CD8-positive, alpha-beta T cell (primary cell): ENCODE measurements at regions of chr17 and their contacts with region 1.

Region 1: DNA sequence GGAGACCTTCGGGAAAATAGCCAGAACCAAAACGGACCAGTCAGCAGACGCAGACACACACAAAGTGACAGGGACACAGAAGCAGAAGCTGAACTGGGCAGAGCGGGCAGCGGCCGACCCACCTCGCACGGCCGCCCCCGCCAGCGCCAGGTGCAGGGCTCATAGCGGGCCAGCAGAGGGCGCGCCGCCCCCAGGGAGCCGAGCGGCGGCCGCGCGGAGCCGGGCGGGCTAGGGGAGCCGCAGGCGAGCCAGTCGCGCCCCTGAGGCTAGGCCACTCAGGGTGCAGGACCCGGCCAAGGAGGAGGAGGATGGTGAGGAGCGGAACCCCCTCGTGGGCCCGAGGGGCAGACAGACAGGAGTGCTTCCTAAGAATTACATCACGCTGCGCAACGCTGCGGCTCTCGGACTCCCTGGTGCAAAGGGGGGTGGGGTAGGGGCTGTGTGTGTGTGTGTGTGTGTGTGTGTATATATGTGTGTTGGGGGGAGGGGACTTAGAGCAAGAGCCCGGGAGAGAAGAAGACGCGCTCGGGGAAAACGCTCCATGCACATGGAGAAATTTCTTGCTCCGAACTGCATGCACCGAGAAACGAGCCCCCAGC is 913 bp upstream of the NOG start:
- DNase-seq: peak; percentile 33 to 87 (median 64)
- ATAC-seq: peak; percentile 63
- H3K4me3 ChIP-seq: peak overlapping the region; percentile 50 to 83
- H3K4me3 Mint-ChIP-seq: peak overlapping the region; percentile 80
- H3K27ac ChIP-seq: peak overlapping the region in 1 of 2 experiments; percentile 46
- H3K27ac Mint-ChIP-seq: peak overlapping the region; percentile 49
- H3K4me1 ChIP-seq: peaks cover 8% of the 10 kb centered on the region
- H3K4me1 Mint-ChIP-seq: peaks cover 20% of the 10 kb centered on the region
- H3K27me3 ChIP-seq: peaks cover 0 to 28% of the 10 kb centered on the region in 2 experiments
- H3K27me3 Mint-ChIP-seq: peaks cover 28% of the 10 kb centered on the region
- CTCF ChIP-seq: peak; percentile 80

Region 2: GRCh38 chr17:56096026-56096810 is 496.4 kb before region 1 on chr17:
- CTCF ChIA-PET with region 1: no interaction called
- POLR2A ChIA-PET with region 1: no interaction called
- intact Hi-C with region 1: no loop called
- DNase-seq: no peak
- ATAC-seq: no peak
- H3K4me3 ChIP-seq: no peak overlapping the region
- H3K4me3 Mint-ChIP-seq: no peak overlapping the region
- H3K27ac ChIP-seq: no peak overlapping the region
- H3K27ac Mint-ChIP-seq: no peak overlapping the region
- H3K4me1 ChIP-seq: no peaks in the 10 kb centered on the region
- H3K4me1 Mint-ChIP-seq: no peaks in the 10 kb centered on the region
- H3K27me3 ChIP-seq: no peaks in the 10 kb centered on the region
- H3K27me3 Mint-ChIP-seq: no peaks in the 10 kb centered on the region
- CTCF ChIP-seq: no peak

Region 3: DNA sequence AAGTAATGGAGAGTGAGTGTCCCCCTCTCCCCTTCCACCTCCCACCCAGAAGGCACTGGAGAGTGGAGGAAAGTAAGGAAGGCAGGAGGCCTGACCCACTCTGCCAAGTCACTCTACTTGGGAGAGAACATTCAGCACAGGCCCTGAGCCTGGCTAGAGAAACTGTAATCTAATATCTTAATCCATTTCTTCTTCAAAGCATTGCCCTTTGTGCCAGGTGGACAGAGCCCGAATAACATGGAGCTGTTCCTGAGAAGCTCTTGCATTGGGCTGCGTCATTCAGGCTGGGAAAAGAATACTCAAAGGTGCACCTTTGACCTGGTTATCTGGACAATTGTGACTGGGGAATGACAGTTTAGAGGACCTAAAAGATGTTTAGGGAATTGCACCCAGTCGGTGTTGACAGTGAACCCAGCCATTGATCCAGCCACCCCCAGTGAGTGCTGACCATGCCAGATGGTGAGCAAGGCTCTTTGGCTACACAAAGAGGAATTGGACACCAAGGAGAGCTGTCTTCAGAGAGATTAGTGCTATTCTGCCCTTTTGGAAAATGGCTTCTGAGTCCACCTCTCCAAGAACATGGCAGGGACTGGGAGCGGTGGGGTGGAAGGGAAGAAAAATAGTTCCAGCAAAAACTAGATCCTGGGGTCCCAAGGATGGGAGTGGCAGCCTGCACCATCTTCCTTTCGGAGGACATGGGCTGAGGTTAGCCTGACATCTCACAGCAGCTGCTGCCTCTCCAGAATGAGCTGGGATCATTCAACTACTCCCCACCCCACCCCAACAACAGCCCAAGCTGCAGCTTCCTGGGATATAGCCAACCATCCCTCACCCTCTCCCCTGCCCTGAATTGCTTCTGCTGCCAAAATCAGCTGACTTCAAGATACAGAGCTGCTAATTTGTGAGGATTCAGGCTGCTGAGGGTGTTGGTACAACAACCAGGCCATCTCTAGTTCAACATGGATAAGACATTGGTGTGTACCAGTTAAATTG is 10.7 kb before region 1 on chr17:
- CTCF ChIA-PET with region 1: interaction called, 13 read pairs
- POLR2A ChIA-PET with region 1: no interaction called
- intact Hi-C with region 1: no loop called
- DNase-seq: no peak
- ATAC-seq: no peak
- H3K4me3 ChIP-seq: no peak overlapping the region
- H3K4me3 Mint-ChIP-seq: no peak overlapping the region
- H3K27ac ChIP-seq: no peak overlapping the region
- H3K27ac Mint-ChIP-seq: no peak overlapping the region
- H3K4me1 ChIP-seq: no peaks in the 10 kb centered on the region
- H3K4me1 Mint-ChIP-seq: no peaks in the 10 kb centered on the region
- H3K27me3 ChIP-seq: no peaks in the 10 kb centered on the region
- H3K27me3 Mint-ChIP-seq: peaks cover 12% of the 10 kb centered on the region
- CTCF ChIP-seq: no peak

Region 4: DNA sequence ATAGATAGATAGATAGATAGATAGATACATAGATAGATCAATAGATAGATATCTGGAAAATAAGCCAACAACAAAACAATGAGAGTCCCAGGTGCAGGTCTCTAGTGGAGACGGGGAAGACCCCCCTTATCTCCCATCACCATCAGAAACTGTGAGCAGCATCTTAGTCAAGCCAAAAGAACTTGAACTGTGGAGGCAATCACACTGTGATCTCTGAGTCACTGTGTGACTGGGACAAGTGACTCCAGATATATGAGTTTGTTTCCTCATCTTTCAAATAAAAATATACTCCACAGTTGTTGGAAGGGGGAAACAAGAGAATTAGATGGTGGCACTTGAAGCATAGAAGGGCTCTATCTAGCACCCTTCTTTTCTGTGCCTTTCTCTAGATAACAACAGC is 43.1 kb after region 1 on chr17:
- CTCF ChIA-PET with region 1: interaction called, 10 read pairs
- POLR2A ChIA-PET with region 1: interaction called, 13 read pairs
- intact Hi-C with region 1: loop called in 1 of 2 experiments (anchors 1 kb)
- DNase-seq: no peak
- ATAC-seq: no peak
- H3K4me3 ChIP-seq: no peak overlapping the region
- H3K4me3 Mint-ChIP-seq: no peak overlapping the region
- H3K27ac ChIP-seq: no peak overlapping the region
- H3K27ac Mint-ChIP-seq: no peak overlapping the region
- H3K4me1 ChIP-seq: no peaks in the 10 kb centered on the region
- H3K4me1 Mint-ChIP-seq: peaks cover 5% of the 10 kb centered on the region
- H3K27me3 ChIP-seq: no peaks in the 10 kb centered on the region
- H3K27me3 Mint-ChIP-seq: peaks cover 6% of the 10 kb centered on the region
- CTCF ChIP-seq: no peak

Region 5: GRCh38 chr17:56679115-56679766 is 86.7 kb after region 1 on chr17:
- CTCF ChIA-PET with region 1: interaction called, 5 read pairs
- POLR2A ChIA-PET with region 1: no interaction called
- intact Hi-C with region 1: loop called (anchors 1 kb)
- DNase-seq: peak in 2 of 9 experiments; percentile 33 to 52
- ATAC-seq: peak; percentile 38
- H3K4me3 ChIP-seq: peak overlapping the region in 1 of 2 experiments; percentile 55
- H3K4me3 Mint-ChIP-seq: peak overlapping the region; percentile 79
- H3K27ac ChIP-seq: no peak overlapping the region
- H3K27ac Mint-ChIP-seq: no peak overlapping the region
- H3K4me1 ChIP-seq: peaks cover 37% of the 10 kb centered on the region
- H3K4me1 Mint-ChIP-seq: peaks cover 32% of the 10 kb centered on the region
- H3K27me3 ChIP-seq: peaks cover 0 to 13% of the 10 kb centered on the region in 2 experiments
- H3K27me3 Mint-ChIP-seq: peaks cover 58% of the 10 kb centered on the region
- CTCF ChIP-seq: peak; percentile 64

Region 6: GRCh38 chr17:56779898-56780733 is 187.5 kb after region 1 on chr17:
- CTCF ChIA-PET with region 1: interaction called, 46 read pairs
- POLR2A ChIA-PET with region 1: interaction called, 8 read pairs
- intact Hi-C with region 1: loop called (anchors 1 kb)
- DNase-seq: peak; percentile 77 to 93 (median 84)
- ATAC-seq: peak; percentile 97
- H3K4me3 ChIP-seq: peak overlapping the region; percentile 44 to 61
- H3K4me3 Mint-ChIP-seq: peak overlapping the region; percentile 93
- H3K27ac ChIP-seq: peak overlapping the region; percentile 63 to 71
- H3K27ac Mint-ChIP-seq: peak overlapping the region; percentile 95
- H3K4me1 ChIP-seq: peaks cover 14% of the 10 kb centered on the region
- H3K4me1 Mint-ChIP-seq: peaks cover 18% of the 10 kb centered on the region
- H3K27me3 ChIP-seq: no peaks in the 10 kb centered on the region
- H3K27me3 Mint-ChIP-seq: no peaks in the 10 kb centered on the region
- CTCF ChIP-seq: peak; percentile 99

Region 7: DNA sequence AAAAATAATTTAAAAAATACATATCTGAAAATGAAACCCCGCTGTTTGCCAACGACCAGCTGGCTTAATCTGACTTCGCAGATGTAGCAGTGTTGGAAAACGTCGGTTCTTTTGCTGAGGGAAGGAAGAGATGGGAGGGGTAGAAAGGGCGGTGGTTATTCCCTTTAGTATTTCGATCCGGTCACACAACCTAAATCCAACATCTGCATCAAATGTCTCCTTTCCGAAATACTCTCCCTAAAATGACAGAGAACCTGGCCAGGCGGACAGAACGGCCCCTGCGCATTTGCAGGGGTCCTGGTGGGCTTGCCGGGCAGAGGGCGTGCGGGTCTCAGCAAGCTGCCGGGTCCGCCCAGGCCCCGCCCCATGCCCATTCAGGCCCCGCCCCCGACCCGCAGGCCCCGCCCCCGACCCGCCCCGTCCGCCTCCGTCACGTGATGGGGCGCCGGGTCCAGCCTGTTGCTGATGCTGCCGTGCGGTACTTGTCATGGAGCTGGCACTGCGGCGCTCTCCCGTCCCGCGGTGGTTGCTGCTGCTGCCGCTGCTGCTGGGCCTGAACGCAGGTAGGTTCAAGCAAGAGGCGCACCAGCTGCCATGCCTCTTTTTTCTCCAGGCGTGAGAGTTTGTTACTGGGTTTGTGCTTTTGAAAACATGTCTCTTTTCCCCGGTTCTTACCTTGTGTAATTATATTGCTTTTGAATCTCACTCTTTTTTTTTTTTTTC is 385.2 kb after region 1 on chr17 and contains the start of gene SCPEP1:
- CTCF ChIA-PET with region 1: no interaction called
- POLR2A ChIA-PET with region 1: no interaction called
- intact Hi-C with region 1: loop called in 1 of 2 experiments (anchors 10 kb)
- DNase-seq: peak; percentile 67 to 89 (median 80)
- ATAC-seq: peak; percentile 98
- H3K4me3 ChIP-seq: peak within 1 kb of the TSS; percentile 73 to 79
- H3K4me3 Mint-ChIP-seq: peak within 1 kb of the TSS; percentile 93
- H3K27ac ChIP-seq: peak within 1 kb of the TSS; percentile 33 to 56
- H3K27ac Mint-ChIP-seq: peak within 1 kb of the TSS; percentile 90
- H3K4me1 ChIP-seq: peaks cover 12% of the 10 kb centered on the region
- H3K4me1 Mint-ChIP-seq: peaks cover 19% of the 10 kb centered on the region
- H3K27me3 ChIP-seq: no peaks in the 10 kb centered on the region
- H3K27me3 Mint-ChIP-seq: peaks cover 2% of the 10 kb centered on the region
- CTCF ChIP-seq: no peak
- total RNA-seq, gene SCPEP1: 22.9 to 28.4 TPM